ENCODE measurements at regions of chr12 and their contacts with region 1.

Region 1: GRCh38 chr12:74537707-74538385 is at the start of gene ATXN7L3B:
- DNase-seq: peak; percentile 87
- ATAC-seq: peak; percentile 99
- H3K4me3 ChIP-seq: peak within 1 kb of the TSS; percentile 88 to 97
- H3K27ac ChIP-seq: peak within 1 kb of the TSS; percentile 81
- H3K4me1 ChIP-seq: peaks cover 10 to 18% of the 10 kb centered on the region in 2 experiments; a peak in 3 of 4 replicates
- H3K27me3 ChIP-seq: no peaks in the 10 kb centered on the region
- CTCF ChIP-seq: 0 out of 6 replicates have a peak, but pooled peaks of 1 of the 3 experiments have one; percentile 18
- POLR2A ChIP-seq: peak; percentile 54
- RAD21 ChIP-seq: no peak
- total RNA-seq, gene ATXN7L3B: 28.1 TPM

Region 2: GRCh38 chr12:74111688-74112360 is 426.0 kb before region 1 on chr12:
- CTCF ChIA-PET with region 1: no interaction called
- POLR2A ChIA-PET with region 1: no interaction called
- RAD21 ChIA-PET with region 1: no interaction called
- intact Hi-C with region 1: loop called (anchors 5 kb)
- DNase-seq: peak; percentile 52
- ATAC-seq: peak; percentile 97
- H3K4me3 ChIP-seq: no peak overlapping the region
- H3K27ac ChIP-seq: no peak overlapping the region
- H3K4me1 ChIP-seq: peaks cover 0 to 3% of the 10 kb centered on the region in 2 experiments; a peak in 1 of 4 replicates
- H3K27me3 ChIP-seq: no peaks in the 10 kb centered on the region
- CTCF ChIP-seq: peak; percentile 63 to 76 (median 76); a peak in 5 of 6 replicates
- POLR2A ChIP-seq: no peak
- RAD21 ChIP-seq: peak; percentile 86

Region 3: DNA sequence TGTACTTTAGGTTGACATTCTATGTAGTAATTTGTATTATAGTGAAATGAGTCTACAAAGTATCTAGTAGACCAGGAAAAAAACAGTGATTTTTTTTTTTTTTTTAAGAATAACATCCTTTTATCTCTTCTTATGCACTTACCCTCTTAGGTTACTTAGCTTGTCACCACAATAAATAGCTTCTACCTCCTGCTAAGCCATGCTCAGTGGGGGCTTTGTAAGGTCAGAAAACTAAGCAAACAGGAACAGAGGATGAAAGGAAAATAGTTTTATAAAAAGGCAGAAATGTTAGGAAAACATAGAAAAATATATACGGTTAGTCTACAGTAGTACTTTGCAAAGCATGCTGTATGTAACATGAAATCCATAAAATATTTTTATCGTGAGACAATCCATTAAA is 385.5 kb before region 1 on chr12:
- CTCF ChIA-PET with region 1: no interaction called
- POLR2A ChIA-PET with region 1: no interaction called
- RAD21 ChIA-PET with region 1: no interaction called
- intact Hi-C with region 1: no loop called
- DNase-seq: no peak
- ATAC-seq: no peak
- H3K4me3 ChIP-seq: no peak overlapping the region
- H3K27ac ChIP-seq: no peak overlapping the region
- H3K4me1 ChIP-seq: no peaks in the 10 kb centered on the region
- H3K27me3 ChIP-seq: no peaks in the 10 kb centered on the region
- CTCF ChIP-seq: no peak
- POLR2A ChIP-seq: no peak
- RAD21 ChIP-seq: no peak

Region 4: DNA sequence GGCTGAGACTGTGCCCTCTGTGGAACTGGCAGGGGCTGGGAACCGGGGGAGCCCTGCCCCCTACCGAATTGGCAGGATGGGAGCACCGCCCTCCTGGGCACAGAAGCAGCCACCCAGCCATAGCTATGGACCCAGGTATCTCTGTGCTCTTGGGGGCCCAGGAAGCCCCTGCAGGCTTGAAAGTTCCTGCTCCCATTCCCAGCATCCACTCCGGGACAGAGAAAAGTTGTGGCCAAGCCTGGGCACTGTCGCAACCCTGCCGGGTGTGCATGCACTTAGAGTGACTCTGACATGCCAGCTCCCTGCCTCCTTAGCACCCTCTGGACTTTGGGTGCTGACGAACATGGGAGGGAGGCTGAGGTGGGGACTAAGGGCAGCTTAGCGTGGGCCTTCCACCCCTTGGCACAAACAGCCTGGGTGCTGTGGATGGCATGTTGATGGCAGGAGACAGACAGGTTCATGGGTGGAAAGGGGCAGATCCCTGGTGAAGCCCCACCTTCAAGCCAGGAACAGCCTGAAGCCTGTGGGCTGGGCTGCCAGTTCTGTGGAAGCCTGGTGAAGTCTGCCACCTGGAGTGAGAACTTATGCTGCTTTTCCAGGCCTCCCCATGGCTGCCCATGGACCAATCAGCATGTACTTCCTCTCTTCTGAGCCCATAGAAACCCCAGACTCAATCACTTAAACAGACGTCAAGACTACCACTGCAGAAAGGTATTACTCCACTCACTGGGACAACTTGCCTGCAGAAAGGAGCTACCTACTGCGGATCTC is 278.7 kb after region 1 on chr12:
- CTCF ChIA-PET with region 1: no interaction called
- POLR2A ChIA-PET with region 1: no interaction called
- RAD21 ChIA-PET with region 1: no interaction called
- intact Hi-C with region 1: no loop called
- DNase-seq: no peak
- ATAC-seq: peak; percentile 70
- H3K4me3 ChIP-seq: no peak overlapping the region
- H3K27ac ChIP-seq: no peak overlapping the region
- H3K4me1 ChIP-seq: no peaks in the 10 kb centered on the region
- H3K27me3 ChIP-seq: no peaks in the 10 kb centered on the region
- CTCF ChIP-seq: no peak
- POLR2A ChIP-seq: no peak
- RAD21 ChIP-seq: no peak

Measured in HCT116 (cell line).